ENCODE measurements at regions of chr19 and their contacts with region 1.

Region 1: GRCh38 chr19:2962045-2962561 is 15.3 kb upstream of the TLE6 start:
- DNase-seq: peak; percentile 89
- H3K4me3 ChIP-seq: no peak overlapping the region
- H3K27ac ChIP-seq: no peak overlapping the region
- H3K4me1 ChIP-seq: no peaks in the 10 kb centered on the region
- H3K27me3 ChIP-seq: no peaks in the 10 kb centered on the region
- CTCF ChIP-seq: peak; percentile 51 to 52
- POLR2A ChIP-seq: no peak

Region 2: GRCh38 chr19:2848616-2849015 is 113.5 kb before region 1 on chr19:
- CTCF ChIA-PET with region 1: no interaction called
- POLR2A ChIA-PET with region 1: no interaction called
- dilution Hi-C with region 1: no loop called
- intact Hi-C with region 1: no loop called
- DNase-seq: no peak
- H3K4me3 ChIP-seq: no peak overlapping the region
- H3K27ac ChIP-seq: no peak overlapping the region
- H3K4me1 ChIP-seq: peaks cover 9% of the 10 kb centered on the region
- H3K27me3 ChIP-seq: no peaks in the 10 kb centered on the region
- CTCF ChIP-seq: no peak
- POLR2A ChIP-seq: no peak

Region 3: DNA sequence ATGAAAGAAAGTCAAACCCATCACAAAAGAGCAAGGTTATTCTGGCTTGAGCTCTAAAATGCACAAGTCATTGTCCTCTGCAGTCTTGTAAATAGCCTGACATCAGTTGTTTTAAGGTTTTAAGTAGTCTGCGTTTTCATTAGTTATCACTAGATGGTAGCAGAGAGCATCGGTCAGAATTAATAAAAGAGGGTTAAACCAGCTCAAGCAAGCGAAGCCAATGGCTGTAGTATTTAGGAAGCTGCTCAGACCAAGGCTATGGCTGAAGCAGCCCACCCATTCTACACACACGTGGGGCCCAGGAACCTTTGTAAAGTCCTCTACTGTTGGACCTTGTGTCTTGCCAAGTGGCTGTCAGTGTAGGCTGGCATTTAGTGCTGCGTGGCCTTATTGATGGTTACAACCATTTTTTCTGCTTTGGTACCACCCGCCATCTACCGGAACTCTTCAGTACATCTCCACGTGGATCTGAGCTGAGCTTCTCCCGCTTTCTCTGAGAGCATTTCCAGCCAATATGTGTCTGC is 74.7 kb before region 1 on chr19:
- CTCF ChIA-PET with region 1: interaction called, 24 read pairs
- POLR2A ChIA-PET with region 1: no interaction called
- dilution Hi-C with region 1: no loop called
- intact Hi-C with region 1: no loop called
- DNase-seq: peak; percentile 85
- H3K4me3 ChIP-seq: no peak overlapping the region
- H3K27ac ChIP-seq: no peak overlapping the region
- H3K4me1 ChIP-seq: peaks cover 3% of the 10 kb centered on the region
- H3K27me3 ChIP-seq: no peaks in the 10 kb centered on the region
- CTCF ChIP-seq: peak; percentile 58 to 60
- POLR2A ChIP-seq: no peak

Region 4: GRCh38 chr19:2987797-2988196 is 25.7 kb after region 1 on chr19:
- CTCF ChIA-PET with region 1: no interaction called
- POLR2A ChIA-PET with region 1: no interaction called
- dilution Hi-C with region 1: no loop called
- intact Hi-C with region 1: no loop called
- DNase-seq: no peak
- H3K4me3 ChIP-seq: no peak overlapping the region
- H3K27ac ChIP-seq: no peak overlapping the region
- H3K4me1 ChIP-seq: peaks cover 15% of the 10 kb centered on the region
- H3K27me3 ChIP-seq: no peaks in the 10 kb centered on the region
- CTCF ChIP-seq: no peak
- POLR2A ChIP-seq: no peak

Region 5: GRCh38 chr19:3075895-3076431 is 113.9 kb after region 1 on chr19:
- CTCF ChIA-PET with region 1: interaction called, 5 read pairs
- POLR2A ChIA-PET with region 1: no interaction called
- dilution Hi-C with region 1: no loop called
- intact Hi-C with region 1: loop called (anchors 1 kb)
- DNase-seq: peak; percentile 49
- H3K4me3 ChIP-seq: no peak overlapping the region
- H3K27ac ChIP-seq: no peak overlapping the region
- H3K4me1 ChIP-seq: no peaks in the 10 kb centered on the region
- H3K27me3 ChIP-seq: no peaks in the 10 kb centered on the region
- CTCF ChIP-seq: peak; percentile 92 to 97
- POLR2A ChIP-seq: no peak

Region 6: GRCh38 chr19:3100081-3100864 is 138.2 kb after region 1 on chr19:
- CTCF ChIA-PET with region 1: interaction called, 200 read pairs
- POLR2A ChIA-PET with region 1: no interaction called
- dilution Hi-C with region 1: no loop called
- intact Hi-C with region 1: loop called (anchors 1 kb)
- DNase-seq: no peak
- H3K4me3 ChIP-seq: no peak overlapping the region
- H3K27ac ChIP-seq: no peak overlapping the region
- H3K4me1 ChIP-seq: peaks cover 34% of the 10 kb centered on the region
- H3K27me3 ChIP-seq: no peaks in the 10 kb centered on the region
- CTCF ChIP-seq: no peak
- POLR2A ChIP-seq: no peak

Region 7: DNA sequence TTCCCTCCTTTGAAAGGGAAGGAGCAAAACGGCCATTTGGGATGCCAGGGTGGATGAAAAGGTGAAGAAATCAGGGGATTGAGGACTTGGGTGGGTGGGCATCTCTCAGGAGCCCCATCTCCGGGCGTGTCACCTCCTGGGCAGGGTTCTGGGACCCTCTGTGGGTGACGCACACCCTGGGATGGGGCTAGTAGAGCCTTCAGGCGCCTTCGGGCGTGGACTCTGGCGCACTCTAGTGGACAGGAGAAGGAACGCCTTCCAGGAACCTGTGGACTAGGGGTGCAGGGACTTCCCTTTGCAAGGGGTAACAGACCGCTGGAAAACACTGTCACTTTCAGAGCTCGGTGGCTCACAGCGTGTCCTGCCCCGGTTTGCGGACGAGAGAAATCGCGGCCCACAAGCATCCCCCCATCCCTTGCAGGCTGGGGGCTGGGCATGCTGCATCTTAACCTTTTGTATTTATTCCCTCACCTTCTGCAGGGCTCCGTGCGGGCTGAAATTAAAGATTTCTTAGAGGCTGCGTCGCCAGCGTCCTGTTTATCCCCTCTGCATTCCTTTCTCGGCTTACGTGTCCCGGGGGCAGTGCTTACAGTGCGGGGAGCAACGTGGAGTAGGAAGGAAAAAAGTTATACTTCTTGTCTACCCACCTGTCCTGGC is 201.3 kb after region 1 on chr19:
- CTCF ChIA-PET with region 1: interaction called, 5 read pairs
- POLR2A ChIA-PET with region 1: no interaction called
- dilution Hi-C with region 1: no loop called
- intact Hi-C with region 1: loop called (anchors 1 kb)
- DNase-seq: peak; percentile 54
- H3K4me3 ChIP-seq: no peak overlapping the region
- H3K27ac ChIP-seq: no peak overlapping the region
- H3K4me1 ChIP-seq: peaks cover 6% of the 10 kb centered on the region
- H3K27me3 ChIP-seq: no peaks in the 10 kb centered on the region
- CTCF ChIP-seq: peak; percentile 79 to 97
- POLR2A ChIP-seq: no peak

Region 8: DNA sequence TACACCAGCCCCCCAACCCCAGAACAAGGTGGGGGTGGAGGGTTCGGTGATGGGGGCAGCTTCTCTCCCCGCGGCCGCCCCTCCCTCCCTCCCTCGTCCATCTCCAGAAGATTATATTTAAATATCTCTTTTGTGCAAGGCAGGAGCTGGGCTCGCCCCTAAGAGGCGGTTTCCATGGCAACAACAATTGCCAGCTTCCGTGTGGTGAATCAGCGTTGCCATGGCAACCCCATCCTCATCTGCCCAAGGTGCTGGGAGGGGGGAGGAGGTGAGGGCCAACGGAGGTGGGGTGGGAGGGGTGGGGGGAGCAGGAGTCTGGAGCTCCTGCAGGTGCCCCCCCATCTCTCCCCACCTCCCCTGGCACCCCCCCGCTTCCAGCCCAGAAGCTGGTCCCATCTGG is 308.8 kb after region 1 on chr19:
- CTCF ChIA-PET with region 1: no interaction called
- POLR2A ChIA-PET with region 1: no interaction called
- dilution Hi-C with region 1: no loop called
- intact Hi-C with region 1: no loop called
- DNase-seq: no peak
- H3K4me3 ChIP-seq: no peak overlapping the region
- H3K27ac ChIP-seq: no peak overlapping the region
- H3K4me1 ChIP-seq: no peaks in the 10 kb centered on the region
- H3K27me3 ChIP-seq: peaks cover 16 to 24% of the 10 kb centered on the region in 2 experiments
- CTCF ChIP-seq: no peak
- POLR2A ChIP-seq: no peak

Region 9: GRCh38 chr19:3336680-3337523 is 374.8 kb after region 1 on chr19:
- CTCF ChIA-PET with region 1: no interaction called
- POLR2A ChIA-PET with region 1: no interaction called
- dilution Hi-C with region 1: no loop called
- intact Hi-C with region 1: no loop called
- DNase-seq: peak; percentile 33
- H3K4me3 ChIP-seq: no peak overlapping the region
- H3K27ac ChIP-seq: no peak overlapping the region
- H3K4me1 ChIP-seq: no peaks in the 10 kb centered on the region
- H3K27me3 ChIP-seq: no peaks in the 10 kb centered on the region
- CTCF ChIP-seq: no peak
- POLR2A ChIP-seq: no peak